WTC11 (cell line): ENCODE measurements at regions of chr17 and their contacts with region 1.

Region 1: DNA sequence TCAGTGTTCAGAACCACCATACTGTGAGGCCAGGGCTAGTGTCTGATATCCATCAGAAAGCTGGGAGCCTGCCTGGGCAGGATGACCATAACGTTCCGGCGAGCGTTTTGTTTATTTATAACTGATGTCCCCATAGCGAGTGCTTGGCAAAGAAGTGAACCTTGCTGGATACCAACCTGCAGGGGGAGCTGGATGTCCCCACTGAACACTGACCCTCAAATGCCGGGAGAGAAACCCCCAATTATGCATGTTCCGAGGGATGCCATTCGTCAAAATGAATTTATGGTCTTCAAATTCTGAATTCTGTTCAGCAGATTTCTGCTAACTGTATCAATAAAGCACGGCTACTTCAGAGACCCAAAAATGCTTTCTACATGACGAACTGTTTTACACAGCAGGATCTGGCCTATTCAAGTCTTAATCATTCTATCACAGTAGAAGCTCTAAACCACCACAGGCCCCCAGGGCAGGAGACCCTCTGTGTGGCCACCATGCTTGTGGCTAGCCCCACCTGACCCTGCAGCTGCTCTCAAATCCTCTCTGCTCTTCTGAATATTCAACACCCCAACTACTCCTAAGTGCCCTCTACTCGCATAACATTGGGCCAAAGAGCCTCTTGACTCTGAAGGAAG is 15.2 kb downstream of the MED24 start:
- DNase-seq: peak; percentile 59
- ATAC-seq: peak; percentile 65
- H3K4me3 Mint-ChIP-seq: 0 out of 2 replicates have a peak overlapping the region, but pooled peaks have one; percentile 6
- H3K27ac Mint-ChIP-seq: peak overlapping the region; percentile 62
- H3K4me1 Mint-ChIP-seq: peaks cover 18% of the 10 kb centered on the region
- H3K27me3 Mint-ChIP-seq: no peaks in the 10 kb centered on the region
- CTCF ChIP-seq: 0 out of 2 replicates have a peak, but pooled peaks have one; percentile 11

Region 2: GRCh38 chr17:39813631-39814030 is 225.4 kb before region 1 on chr17:
- CTCF ChIA-PET with region 1: no interaction called
- POLR2A ChIA-PET with region 1: no interaction called
- DNase-seq: no peak
- ATAC-seq: no peak
- H3K4me3 Mint-ChIP-seq: no peak overlapping the region
- H3K27ac Mint-ChIP-seq: no peak overlapping the region
- H3K4me1 Mint-ChIP-seq: peaks cover 14% of the 10 kb centered on the region
- H3K27me3 Mint-ChIP-seq: no peaks in the 10 kb centered on the region
- CTCF ChIP-seq: no peak

Region 3: GRCh38 chr17:39916918-39917317 is 122.1 kb before region 1 on chr17:
- CTCF ChIA-PET with region 1: no interaction called
- POLR2A ChIA-PET with region 1: no interaction called
- DNase-seq: no peak
- ATAC-seq: peak; percentile 47; the same call in 1 of the 2 replicates
- H3K4me3 Mint-ChIP-seq: no peak overlapping the region
- H3K27ac Mint-ChIP-seq: 0 out of 2 replicates have a peak overlapping the region, but pooled peaks have one; percentile 28
- H3K4me1 Mint-ChIP-seq: peaks cover 2% of the 10 kb centered on the region
- H3K27me3 Mint-ChIP-seq: no peaks in the 10 kb centered on the region
- CTCF ChIP-seq: no peak

Region 4: GRCh38 chr17:40021451-40021971 is 17.5 kb before region 1 on chr17:
- CTCF ChIA-PET with region 1: interaction called, 42 read pairs
- POLR2A ChIA-PET with region 1: interaction called, 4 read pairs
- DNase-seq: no peak
- ATAC-seq: no peak
- H3K4me3 Mint-ChIP-seq: no peak overlapping the region
- H3K27ac Mint-ChIP-seq: peak overlapping the region; percentile 53; the same call in 1 of the 2 replicates
- H3K4me1 Mint-ChIP-seq: peaks cover 24% of the 10 kb centered on the region
- H3K27me3 Mint-ChIP-seq: no peaks in the 10 kb centered on the region
- CTCF ChIP-seq: no peak

Region 5: DNA sequence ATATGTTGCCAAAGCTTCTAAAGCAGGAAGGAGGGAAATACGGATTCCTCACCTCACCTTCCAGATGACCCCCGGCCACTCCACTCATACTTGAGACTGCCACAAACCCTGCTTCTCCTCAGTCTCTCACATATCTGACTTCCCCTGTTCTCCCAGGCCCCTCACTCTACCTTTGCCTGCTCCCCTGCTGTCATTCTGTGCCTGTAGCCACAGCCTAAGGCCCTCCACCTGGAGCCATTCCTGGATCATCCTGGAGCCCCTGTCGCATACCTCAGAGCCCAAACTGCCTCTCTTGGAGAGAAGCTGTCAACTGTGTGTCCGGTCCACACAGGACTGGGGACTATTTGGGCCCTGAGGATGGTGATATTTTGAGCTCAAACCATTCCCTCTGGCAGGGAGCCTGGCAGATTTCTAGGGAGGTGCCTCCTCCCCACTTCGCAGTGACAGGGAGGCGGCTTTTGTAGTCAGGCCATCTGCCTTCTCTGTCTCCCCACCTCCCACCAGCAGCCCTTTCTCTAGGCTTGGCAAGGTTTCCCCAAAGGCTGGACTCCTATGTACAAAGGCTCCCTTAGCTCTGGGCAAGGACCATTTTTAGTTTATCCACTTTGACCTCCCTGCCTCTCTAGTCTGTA is 17.5 kb after region 1 on chr17:
- CTCF ChIA-PET with region 1: interaction called, 30 read pairs
- POLR2A ChIA-PET with region 1: interaction called, 10 read pairs
- DNase-seq: no peak
- ATAC-seq: no peak
- H3K4me3 Mint-ChIP-seq: no peak overlapping the region
- H3K27ac Mint-ChIP-seq: no peak overlapping the region
- H3K4me1 Mint-ChIP-seq: peaks cover 34% of the 10 kb centered on the region
- H3K27me3 Mint-ChIP-seq: peaks cover 9% of the 10 kb centered on the region
- CTCF ChIP-seq: no peak

Region 6: GRCh38 chr17:40068917-40069750 is 30.1 kb after region 1 on chr17:
- CTCF ChIA-PET with region 1: interaction called, 193 read pairs
- POLR2A ChIA-PET with region 1: no interaction called
- DNase-seq: no peak
- ATAC-seq: peak; percentile 4
- H3K4me3 Mint-ChIP-seq: peak overlapping the region; percentile 53
- H3K27ac Mint-ChIP-seq: peak overlapping the region; percentile 29; the same call in 1 of the 2 replicates
- H3K4me1 Mint-ChIP-seq: peaks cover 75% of the 10 kb centered on the region
- H3K27me3 Mint-ChIP-seq: peaks cover 7% of the 10 kb centered on the region
- CTCF ChIP-seq: no peak

Region 7: GRCh38 chr17:40091691-40092397 is 52.8 kb after region 1 on chr17:
- CTCF ChIA-PET with region 1: interaction called, 161 read pairs
- POLR2A ChIA-PET with region 1: no interaction called
- DNase-seq: no peak
- ATAC-seq: peak; percentile 29
- H3K4me3 Mint-ChIP-seq: no peak overlapping the region
- H3K27ac Mint-ChIP-seq: no peak overlapping the region
- H3K4me1 Mint-ChIP-seq: peaks cover 23% of the 10 kb centered on the region
- H3K27me3 Mint-ChIP-seq: no peaks in the 10 kb centered on the region; the same call in 1 of the 2 replicates
- CTCF ChIP-seq: no peak

Region 8: GRCh38 chr17:40219073-40219860 is 180.3 kb after region 1 on chr17 and contains the start of gene WIPF2:
- CTCF ChIA-PET with region 1: interaction called, 10 read pairs
- POLR2A ChIA-PET with region 1: no interaction called
- DNase-seq: peak; percentile 99
- ATAC-seq: peak; percentile 90
- H3K4me3 Mint-ChIP-seq: peak within 1 kb of the TSS; percentile 90
- H3K27ac Mint-ChIP-seq: peak within 1 kb of the TSS; percentile 100
- H3K4me1 Mint-ChIP-seq: peaks cover 18% of the 10 kb centered on the region
- H3K27me3 Mint-ChIP-seq: no peaks in the 10 kb centered on the region; the same call in 1 of the 2 replicates
- CTCF ChIP-seq: peak; percentile 81
- total RNA-seq, gene WIPF2: 23.0 to 24.6 TPM (median 23.8 TPM) in 3 replicates